Esophagus muscularis mucosa (tissue), 4 donors: ENCODE measurements at regions of chr3 and their contacts with region 1.

Region 1: GRCh38 chr3:184241447-184242296 is 7.1 kb downstream of the ALG3 start:
- DNase-seq: no peak
- H3K4me3 ChIP-seq: no peak overlapping the region
- H3K27ac ChIP-seq: no peak overlapping the region
- H3K4me1 ChIP-seq: peaks cover 6 to 10% (median 9%) of the 10 kb centered on the region in 4 donors
- H3K27me3 ChIP-seq: peaks cover 0 to 44% (median 2%) of the 10 kb centered on the region in 4 donors
- CTCF ChIP-seq: peak; percentile 32 to 55 (median 34)
- EP300 ChIP-seq: no peak
- POLR2A ChIP-seq: no peak

Region 2: DNA sequence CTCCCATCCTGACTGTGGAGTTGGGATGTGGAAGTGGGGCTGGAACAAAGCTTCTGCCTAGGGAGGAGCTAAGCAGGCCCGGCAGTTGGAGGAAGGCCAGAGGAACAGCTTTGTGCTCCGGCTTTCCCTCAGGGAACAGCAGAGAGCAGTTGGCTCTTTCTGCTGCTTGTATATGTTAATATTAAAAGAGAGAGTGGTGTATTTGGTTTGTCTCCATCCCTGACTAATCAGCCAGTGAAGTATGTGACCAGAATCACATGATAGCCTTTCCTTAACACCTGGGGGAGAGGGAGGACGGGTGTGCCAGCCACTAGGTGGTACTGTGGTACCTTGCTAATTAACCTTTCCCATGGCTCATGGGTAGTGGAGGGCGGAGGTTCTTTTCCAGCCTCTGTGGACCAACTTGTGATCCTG is 96.6 kb before region 1 on chr3:
- intact Hi-C with region 1: loop called (anchors 5 kb)
- DNase-seq: no peak
- H3K4me3 ChIP-seq: no peak overlapping the region
- H3K27ac ChIP-seq: peak overlapping the region in 1 of 4 donors; percentile 22
- H3K4me1 ChIP-seq: peaks cover 4 to 11% (median 8%) of the 10 kb centered on the region in 4 donors
- H3K27me3 ChIP-seq: no peaks in the 10 kb centered on the region
- CTCF ChIP-seq: peak; percentile 43 to 53 (median 47)
- EP300 ChIP-seq: no peak
- POLR2A ChIP-seq: no peak